OCI-LY7 (cell line): ENCODE measurements at regions of chr12 and their contacts with region 1.

Region 1: GRCh38 chr12:31406345-31406744 is 80.4 kb upstream of the SINHCAF start:
- DNase-seq: peak; percentile 88
- H3K4me3 ChIP-seq: peak overlapping the region; percentile 33
- H3K27ac ChIP-seq: peak overlapping the region; percentile 99
- H3K4me1 ChIP-seq: peaks cover 71% of the 10 kb centered on the region
- CTCF ChIP-seq: no peak

Region 2: GRCh38 chr12:31325877-31326631 is 80.3 kb before region 1 on chr12 and contains the start of gene SINHCAF:
- CTCF ChIA-PET with region 1: no interaction called
- POLR2A ChIA-PET with region 1: no interaction called
- intact Hi-C with region 1: loop called (anchors 2 kb)
- DNase-seq: peak; percentile 99
- H3K4me3 ChIP-seq: peak within 1 kb of the TSS; percentile 86
- H3K27ac ChIP-seq: peak within 1 kb of the TSS; percentile 69
- H3K4me1 ChIP-seq: peaks cover 26% of the 10 kb centered on the region
- CTCF ChIP-seq: no peak
- total RNA-seq, gene SINHCAF: 51.0 and 54.0 TPM in 2 replicates

Region 3: DNA sequence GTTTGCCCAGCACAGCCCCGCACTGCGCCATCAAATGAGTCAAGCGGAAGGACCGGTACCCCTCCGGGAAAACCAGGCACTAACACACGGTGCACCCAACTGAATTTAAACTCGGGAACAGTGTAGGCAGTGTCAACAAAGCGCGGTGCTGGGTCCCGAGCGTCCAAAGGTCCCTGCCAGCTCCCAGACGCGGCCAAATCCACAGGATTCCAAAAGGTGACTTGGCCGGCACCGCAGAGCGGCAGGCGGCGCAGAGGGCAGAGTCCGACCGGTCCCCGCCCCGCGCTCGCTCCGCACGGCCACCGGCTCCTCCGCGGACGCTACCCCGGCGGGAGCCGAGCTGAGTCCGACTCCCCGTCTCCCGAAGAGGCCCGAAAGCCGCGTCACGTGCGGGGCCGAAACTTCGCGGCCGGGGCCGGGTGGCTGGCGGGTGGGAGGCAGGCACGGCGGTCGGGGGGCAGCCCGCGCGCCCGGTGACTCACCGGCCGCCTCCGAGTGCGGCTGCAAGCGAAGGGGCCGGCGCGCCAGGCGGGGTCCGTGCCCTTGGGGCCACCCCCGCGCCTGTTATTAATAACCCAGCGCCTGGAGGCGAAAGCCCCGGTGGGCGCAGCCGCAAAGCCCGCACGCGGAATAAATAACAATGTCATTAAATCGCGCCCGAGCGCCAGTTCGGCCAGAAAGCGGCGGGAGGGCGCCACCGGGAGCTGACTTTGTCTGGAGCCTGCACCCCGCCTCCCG is 183.7 kb after region 1 on chr12:
- CTCF ChIA-PET with region 1: no interaction called
- POLR2A ChIA-PET with region 1: interaction called, 5 read pairs
- intact Hi-C with region 1: loop called (anchors 1 kb)
- DNase-seq: peak; percentile 81
- H3K4me3 ChIP-seq: peak overlapping the region; percentile 89
- H3K27ac ChIP-seq: peak overlapping the region; percentile 72
- H3K4me1 ChIP-seq: peaks cover 55% of the 10 kb centered on the region
- CTCF ChIP-seq: peak; percentile 54

Region 4: DNA sequence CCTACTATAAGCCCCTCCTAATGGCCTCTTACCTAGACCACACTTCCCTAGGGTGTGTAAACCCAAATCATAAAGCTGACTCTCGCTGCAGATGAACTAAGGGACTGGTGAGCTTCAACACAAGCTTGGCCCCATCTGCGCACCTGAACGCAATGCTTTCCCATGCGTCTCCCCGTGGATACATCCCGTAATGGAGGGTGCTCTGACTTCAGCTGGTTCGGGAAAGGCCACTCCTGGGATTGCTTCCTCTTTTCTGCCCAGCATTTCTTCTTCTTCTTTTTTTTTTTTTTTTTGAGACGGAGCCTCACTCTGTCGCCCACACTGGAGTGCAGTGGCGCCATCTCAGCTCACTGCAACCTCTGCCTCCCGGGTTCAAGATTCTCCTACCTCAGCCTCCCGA is 225.4 kb after region 1 on chr12:
- CTCF ChIA-PET with region 1: interaction called, 4 read pairs
- POLR2A ChIA-PET with region 1: interaction called, 8 read pairs
- intact Hi-C with region 1: loop called (anchors 1 kb)
- DNase-seq: no peak
- H3K4me3 ChIP-seq: no peak overlapping the region
- H3K27ac ChIP-seq: no peak overlapping the region
- H3K4me1 ChIP-seq: peaks cover 45% of the 10 kb centered on the region
- CTCF ChIP-seq: no peak

Region 5: GRCh38 chr12:31682136-31682962 is 276.0 kb after region 1 on chr12:
- CTCF ChIA-PET with region 1: no interaction called
- POLR2A ChIA-PET with region 1: no interaction called
- intact Hi-C with region 1: loop called (anchors 1 kb)
- DNase-seq: peak; percentile 95
- H3K4me3 ChIP-seq: no peak overlapping the region
- H3K27ac ChIP-seq: peak overlapping the region; percentile 56
- H3K4me1 ChIP-seq: peaks cover 34% of the 10 kb centered on the region
- CTCF ChIP-seq: peak; percentile 92